ENCODE measurements at regions of chr6 and their contacts with region 1.

Region 1: DNA sequence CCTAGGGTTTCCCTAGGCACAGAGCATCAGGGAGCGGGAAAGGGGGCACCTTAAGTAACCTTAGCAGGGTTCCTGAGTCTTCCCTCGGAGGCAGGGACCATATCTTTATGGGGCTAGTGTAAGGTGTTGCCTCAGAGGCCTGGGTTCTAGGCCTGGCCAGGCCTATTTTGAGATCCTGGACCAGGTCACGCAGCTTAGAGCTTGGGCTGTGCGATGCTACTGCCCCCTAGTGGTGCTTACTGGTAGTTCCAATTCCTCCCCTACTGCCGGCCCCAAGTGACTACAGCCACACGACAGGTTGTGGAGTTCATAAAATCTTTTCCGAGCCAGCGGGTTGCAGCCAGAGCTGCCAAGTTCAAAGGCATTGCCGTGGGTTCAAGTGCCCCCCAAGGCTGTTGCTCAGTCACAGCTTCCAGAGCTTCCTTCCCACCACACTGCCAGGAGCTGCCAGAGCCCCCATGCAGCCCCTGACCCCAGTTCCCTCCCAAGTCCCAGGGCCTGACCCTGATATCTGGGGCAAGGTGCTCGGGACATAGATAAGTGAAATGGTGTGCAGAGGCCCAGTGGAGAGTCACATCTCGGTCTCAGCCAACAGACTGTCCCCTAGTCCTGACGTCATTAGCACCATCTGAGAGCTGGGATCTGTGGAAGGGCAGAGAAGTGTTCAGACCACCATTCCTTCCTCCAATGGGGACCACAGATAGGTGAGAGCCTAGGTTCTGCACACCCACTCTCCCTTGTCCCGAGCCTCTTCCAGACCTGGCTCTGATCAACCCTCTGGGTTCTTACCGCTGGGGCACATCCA is 3.3 kb downstream of the LRRC73 start:
- DNase-seq: peak; percentile 89
- ATAC-seq: peak; percentile 83
- H3K4me3 Mint-ChIP-seq: no peak overlapping the region
- H3K27ac Mint-ChIP-seq: no peak overlapping the region
- H3K4me1 Mint-ChIP-seq: peaks cover 7% of the 10 kb centered on the region
- H3K27me3 Mint-ChIP-seq: peaks cover 12% of the 10 kb centered on the region

Region 2: GRCh38 chr6:43228951-43229802 is 277.7 kb before region 1 on chr6 and contains the start of gene DNPH1:
- CTCF ChIA-PET with region 1: interaction called, 13 read pairs
- POLR2A ChIA-PET with region 1: no interaction called
- intact Hi-C with region 1: no loop called
- DNase-seq: peak; percentile 88
- ATAC-seq: peak; percentile 82
- H3K4me3 Mint-ChIP-seq: peak within 1 kb of the TSS; percentile 92
- H3K27ac Mint-ChIP-seq: peak within 1 kb of the TSS; percentile 91
- H3K4me1 Mint-ChIP-seq: peaks cover 41% of the 10 kb centered on the region
- H3K27me3 Mint-ChIP-seq: peaks cover 2% of the 10 kb centered on the region
- total RNA-seq, gene DNPH1: 58.5 to 80.3 TPM

Region 3: DNA sequence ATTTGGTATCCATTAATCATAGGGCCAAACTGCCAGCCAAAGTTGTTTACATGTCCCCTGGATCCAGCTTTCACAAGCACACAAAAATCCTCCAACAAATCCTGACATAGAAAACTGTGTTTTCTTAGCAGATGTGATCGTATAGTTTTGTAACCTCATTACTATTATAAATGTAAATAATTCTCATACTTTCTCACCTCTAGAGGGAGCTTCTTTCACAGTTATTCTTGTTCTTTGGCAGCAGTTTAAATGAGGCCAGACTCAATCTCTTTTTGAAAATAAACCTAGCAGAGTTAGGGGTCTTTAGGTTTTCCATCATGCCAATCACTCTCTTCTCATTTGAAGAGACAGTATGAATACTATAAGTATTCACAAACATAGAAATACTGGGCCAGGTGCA is 120.4 kb before region 1 on chr6:
- CTCF ChIA-PET with region 1: interaction called, 7 read pairs
- POLR2A ChIA-PET with region 1: no interaction called
- intact Hi-C with region 1: loop called (anchors 1 to 2 kb)
- DNase-seq: no peak
- ATAC-seq: no peak
- H3K4me3 Mint-ChIP-seq: no peak overlapping the region
- H3K27ac Mint-ChIP-seq: peak overlapping the region; percentile 6
- H3K4me1 Mint-ChIP-seq: peaks cover 59% of the 10 kb centered on the region
- H3K27me3 Mint-ChIP-seq: peaks cover 2% of the 10 kb centered on the region

Region 4: DNA sequence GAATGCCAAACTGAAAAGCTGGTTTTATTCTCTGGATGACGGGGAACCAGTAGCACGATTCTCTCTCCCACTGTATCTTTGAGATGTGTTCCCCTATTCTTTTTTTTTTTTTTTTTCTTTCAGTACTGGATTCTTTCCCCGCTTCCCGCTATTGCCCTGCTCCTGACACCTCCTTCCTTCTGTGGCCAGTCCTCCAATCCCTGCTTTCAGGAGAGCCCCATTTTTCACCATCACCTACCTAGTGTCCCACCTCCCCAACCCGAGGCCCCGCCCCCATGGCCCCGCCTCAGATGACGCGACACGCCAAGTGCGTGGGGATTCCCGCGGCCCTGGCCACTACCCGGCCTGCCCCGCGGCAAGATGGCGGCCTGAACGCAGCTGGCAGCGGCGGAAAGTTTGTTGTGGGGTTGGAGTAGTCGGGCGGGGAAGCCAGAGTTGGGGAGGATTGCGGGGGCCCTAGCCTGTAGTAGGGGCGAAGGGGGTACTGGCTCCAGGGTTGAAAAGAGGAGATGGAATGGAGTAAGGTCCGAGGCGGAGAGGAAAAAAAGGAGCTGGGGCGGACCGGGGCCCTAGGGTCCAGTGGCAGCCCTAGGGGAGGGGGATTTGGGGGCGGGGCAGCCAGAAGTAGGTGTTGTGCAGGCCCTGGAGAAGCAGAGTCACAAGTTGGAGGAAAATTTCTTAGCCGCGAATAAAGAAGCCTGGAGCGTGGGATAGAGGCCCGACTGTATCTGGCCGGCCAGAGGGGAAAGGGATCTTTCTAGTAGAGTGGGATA is 29.4 kb before region 1 on chr6 and contains the start of gene TJAP1:
- CTCF ChIA-PET with region 1: interaction called, 11 read pairs
- POLR2A ChIA-PET with region 1: interaction called, 5 read pairs
- intact Hi-C with region 1: loop called in 1 of 2 experiments (anchors 1 kb)
- DNase-seq: peak; percentile 98
- ATAC-seq: peak; percentile 99
- H3K4me3 Mint-ChIP-seq: peak within 1 kb of the TSS; percentile 98
- H3K27ac Mint-ChIP-seq: peak within 1 kb of the TSS; percentile 82
- H3K4me1 Mint-ChIP-seq: peaks cover 38% of the 10 kb centered on the region
- H3K27me3 Mint-ChIP-seq: no peaks in the 10 kb centered on the region
- total RNA-seq, gene TJAP1: 35.6 to 37.2 TPM

Region 5: DNA sequence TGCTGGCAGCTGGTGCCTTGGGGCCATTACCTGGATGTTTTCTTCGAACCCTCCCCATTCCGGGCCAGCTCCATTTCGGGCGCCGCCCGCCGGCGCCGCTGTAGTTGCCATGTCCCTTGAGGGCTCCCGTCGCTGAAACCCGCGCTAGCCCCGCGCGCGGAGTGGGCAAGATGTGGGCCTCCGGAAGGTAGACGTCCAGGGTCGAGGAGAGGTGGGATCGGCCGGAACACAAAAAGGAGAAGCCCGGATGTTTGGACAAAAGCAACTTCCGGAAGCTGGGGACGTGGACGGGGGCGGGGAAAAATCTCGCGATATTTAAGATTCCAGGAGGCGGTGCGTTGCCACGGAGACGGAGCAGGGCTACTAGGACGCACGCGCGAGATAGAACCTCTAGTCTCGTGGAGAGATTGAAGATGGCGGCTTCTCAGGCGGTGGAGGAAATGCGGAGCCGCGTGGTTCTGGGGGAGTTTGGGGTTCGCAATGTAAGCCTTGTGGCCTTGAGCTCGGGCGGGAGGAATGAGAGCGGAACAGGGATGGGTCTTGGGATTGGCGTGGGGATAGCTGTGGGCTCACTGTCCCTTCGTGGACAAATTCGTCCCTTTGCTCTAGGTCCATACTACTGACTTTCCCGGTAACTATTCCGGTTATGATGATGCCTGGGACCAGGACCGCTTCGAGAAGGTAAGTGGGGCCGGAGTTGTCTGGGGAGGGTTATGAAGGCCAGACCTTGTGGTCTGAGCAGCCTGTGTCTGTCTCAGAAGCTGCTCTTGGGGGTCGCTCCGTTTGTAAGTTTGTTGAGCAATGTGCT is 10.0 kb after region 1 on chr6 and contains the starts of genes POLR1C and YIPF3:
- CTCF ChIA-PET with region 1: interaction called, 52 read pairs
- POLR2A ChIA-PET with region 1: no interaction called
- intact Hi-C with region 1: no loop called
- DNase-seq: peak; percentile 98
- ATAC-seq: peak; percentile 93
- H3K4me3 Mint-ChIP-seq: no peak within 1 kb of the TSS
- H3K27ac Mint-ChIP-seq: no peak within 1 kb of the TSS
- H3K4me1 Mint-ChIP-seq: peaks cover 32% of the 10 kb centered on the region
- H3K27me3 Mint-ChIP-seq: no peaks in the 10 kb centered on the region
- total RNA-seq, gene POLR1C: 43.4 to 52.9 TPM
- total RNA-seq, gene YIPF3: 38.0 to 39.6 TPM

Measured in activated CD4-positive, alpha-beta T cell treated with anti-CD3 and anti-CD28 coated beads for 36 hours (primary cell).